Activated CD4-positive, alpha-beta T cell treated with anti-CD3 and anti-CD28 coated beads for 36 hours (primary cell): ENCODE measurements at regions of chr1 and their contacts with region 1.

Region 1: GRCh38 chr1:152654110-152654509 is 9.1 kb upstream of the LCE2D start:
- DNase-seq: peak; percentile 78
- ATAC-seq: peak; percentile 55
- H3K4me3 Mint-ChIP-seq: no peak overlapping the region
- H3K27ac Mint-ChIP-seq: no peak overlapping the region
- H3K4me1 Mint-ChIP-seq: peaks cover 1% of the 10 kb centered on the region
- H3K27me3 Mint-ChIP-seq: peaks cover 19% of the 10 kb centered on the region

Region 2: DNA sequence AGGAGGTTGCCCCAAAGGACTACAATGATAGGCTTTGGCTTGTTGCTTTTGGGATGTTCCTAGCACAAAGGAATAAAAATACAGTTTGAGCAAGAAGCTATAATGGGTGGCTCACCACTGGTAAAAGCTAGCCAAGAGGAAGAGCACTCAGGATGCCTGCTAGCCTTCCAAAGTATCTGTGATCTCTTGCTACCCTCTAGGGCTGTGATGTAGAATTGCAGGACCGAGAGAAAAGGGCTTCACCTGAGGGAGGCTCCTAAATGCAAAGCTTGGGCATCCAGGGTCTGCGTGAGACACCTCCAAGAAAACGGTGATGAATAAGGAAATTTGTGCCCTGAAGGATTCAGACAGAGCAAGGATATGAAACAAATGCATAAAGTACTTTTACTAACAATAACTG is 272.0 kb after region 1 on chr1:
- CTCF ChIA-PET with region 1: no interaction called
- POLR2A ChIA-PET with region 1: no interaction called
- intact Hi-C with region 1: loop called in 1 of 2 experiments (anchors 5 kb)
- DNase-seq: no peak
- ATAC-seq: no peak
- H3K4me3 Mint-ChIP-seq: no peak overlapping the region
- H3K27ac Mint-ChIP-seq: no peak overlapping the region
- H3K4me1 Mint-ChIP-seq: no peaks in the 10 kb centered on the region
- H3K27me3 Mint-ChIP-seq: peaks cover 24% of the 10 kb centered on the region

Region 3: DNA sequence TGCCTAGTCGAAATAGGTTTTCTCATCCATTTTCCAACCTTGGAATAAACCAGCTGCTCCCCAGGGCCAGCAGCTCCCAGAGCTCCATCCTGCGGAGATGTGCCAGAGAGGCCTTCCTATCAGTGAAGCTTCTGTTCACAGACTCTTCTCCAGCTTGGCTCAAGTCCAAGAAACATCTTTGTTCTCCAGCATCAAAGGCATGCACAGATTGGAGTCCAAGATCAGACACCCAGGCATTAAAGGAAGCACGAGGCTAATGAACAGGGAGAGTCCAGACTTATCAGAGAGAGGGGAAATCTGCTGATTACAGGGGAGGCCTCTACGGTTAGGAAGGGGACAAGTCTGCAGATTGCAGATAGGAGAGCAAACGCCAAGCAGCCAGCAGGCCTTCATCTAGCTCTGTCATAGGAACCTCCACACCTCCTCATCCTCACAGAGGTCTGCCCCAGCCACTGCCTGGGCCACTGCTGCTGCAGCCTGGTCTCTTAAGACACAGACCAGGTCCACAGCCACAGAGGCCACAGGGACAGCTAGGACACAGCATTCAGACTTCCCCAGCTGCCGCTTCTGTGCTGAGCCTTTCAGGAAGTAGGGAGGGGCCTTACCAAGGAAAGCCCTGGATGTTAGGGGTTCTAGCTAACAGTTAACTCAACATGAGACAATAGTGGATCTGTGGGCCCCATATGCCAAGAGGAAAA is 566.6 kb after region 1 on chr1:
- CTCF ChIA-PET with region 1: interaction called, 4 read pairs
- POLR2A ChIA-PET with region 1: no interaction called
- intact Hi-C with region 1: loop called (anchors 1 to 10 kb)
- DNase-seq: no peak
- ATAC-seq: no peak
- H3K4me3 Mint-ChIP-seq: no peak overlapping the region
- H3K27ac Mint-ChIP-seq: no peak overlapping the region
- H3K4me1 Mint-ChIP-seq: no peaks in the 10 kb centered on the region
- H3K27me3 Mint-ChIP-seq: peaks cover 12% of the 10 kb centered on the region